Posterior vena cava (tissue), 2 donors: ENCODE measurements at regions of chr6 and their contacts with region 1.

Region 1: DNA sequence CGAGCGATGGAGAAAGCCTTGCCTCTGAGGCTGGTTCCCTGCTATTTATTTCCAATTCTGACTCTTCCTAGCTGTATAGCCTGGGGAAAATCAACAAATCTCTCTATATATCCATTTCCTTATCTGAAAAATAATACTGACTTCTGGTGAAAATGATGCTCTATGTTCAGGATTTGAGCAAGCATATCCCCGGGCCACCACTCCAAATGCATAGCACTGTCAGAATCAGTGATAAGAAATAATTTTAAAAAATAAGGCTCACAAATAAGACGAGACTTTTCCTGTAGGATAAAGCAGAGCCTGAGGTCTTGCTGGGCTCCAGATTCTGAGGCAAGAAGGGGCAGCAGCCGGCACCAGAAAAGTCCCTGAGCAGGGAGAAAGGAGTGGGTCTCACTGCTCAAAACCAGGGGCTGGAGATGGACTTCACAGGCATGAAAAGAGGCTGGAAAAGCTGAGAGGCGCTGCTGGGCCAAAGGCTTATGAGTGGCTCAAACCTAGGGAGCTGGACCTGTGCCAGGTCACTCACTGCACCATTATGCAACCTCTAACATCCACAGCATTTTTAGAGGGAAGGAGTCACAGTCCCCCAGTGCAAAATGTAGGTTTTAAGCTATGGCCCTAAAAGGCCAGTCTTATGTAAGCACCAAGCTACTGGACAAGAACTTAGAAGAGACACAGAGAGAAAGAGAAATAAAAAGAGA is 48.1 kb upstream of the SLC17A4 start:
- DNase-seq: no peak

Region 2: DNA sequence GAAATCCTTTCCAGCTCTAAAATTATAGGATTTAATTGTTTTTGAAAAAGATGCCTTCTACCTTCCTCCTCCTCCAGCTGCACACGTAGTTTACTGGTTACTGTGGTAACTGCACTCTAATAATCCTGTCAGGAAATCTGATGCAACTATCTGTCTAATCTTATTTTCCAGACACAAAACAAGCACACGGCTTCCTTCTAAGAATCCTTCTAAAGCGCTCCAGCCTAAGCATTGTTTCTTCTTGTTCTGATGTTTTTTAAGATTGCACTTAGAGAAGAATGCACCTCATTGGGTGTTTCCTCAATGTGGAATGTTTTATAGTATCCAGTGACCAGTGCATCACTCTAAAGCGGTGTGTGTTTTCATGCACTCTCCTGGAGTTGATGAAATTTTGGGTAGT is 363.7 kb before region 1 on chr6:
- intact Hi-C with region 1: no loop called
- DNase-seq: no peak

Region 3: DNA sequence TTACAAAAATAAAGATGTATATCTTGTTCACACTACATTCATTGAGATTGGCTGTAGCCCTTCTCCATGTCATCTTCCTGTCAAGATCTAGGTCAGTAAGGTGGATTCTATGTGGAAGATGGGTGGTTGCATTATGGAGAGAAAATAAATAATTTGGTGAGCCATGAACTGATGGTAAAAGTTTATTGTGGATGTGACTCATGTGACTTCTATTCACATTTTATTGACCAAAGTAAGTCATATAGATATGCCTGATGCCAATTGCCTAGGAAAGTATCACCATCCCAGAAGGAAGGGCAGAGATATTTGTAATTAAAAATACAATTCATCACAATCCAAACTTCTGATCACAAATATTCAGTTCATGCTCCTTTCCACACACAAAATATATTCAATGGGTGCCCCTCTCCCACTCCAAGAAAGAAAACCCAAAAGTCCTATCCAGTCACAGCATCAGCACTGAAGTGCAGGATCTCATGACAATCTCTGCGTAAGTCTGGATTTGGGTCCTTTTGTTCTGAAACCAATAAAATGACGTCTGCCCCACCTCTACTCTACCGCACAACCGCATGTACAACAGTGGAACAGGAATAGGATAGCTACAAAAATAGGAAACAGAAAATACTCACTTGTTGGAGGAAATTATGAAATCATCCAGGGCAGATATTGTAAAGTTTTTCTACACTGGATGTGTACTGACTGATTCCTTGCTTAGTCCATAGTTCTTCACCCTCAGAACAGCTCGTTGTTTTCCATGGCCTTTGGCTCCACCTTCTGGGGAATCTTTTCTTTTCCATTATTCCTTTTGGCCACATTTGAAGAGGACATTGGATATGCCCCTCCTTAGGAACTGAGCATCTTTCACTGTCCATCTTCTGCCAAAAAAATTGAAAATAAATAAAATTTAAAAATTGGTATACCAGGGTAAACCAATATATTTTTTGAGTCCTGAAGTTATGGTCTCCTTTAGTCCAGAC is 183.7 kb after region 1 on chr6:
- intact Hi-C with region 1: loop called in 1 of 2 experiments (anchors 10 kb)
- DNase-seq: no peak